Calu3 (cell line): ENCODE measurements at regions of chrX and their contacts with region 1.

Region 1: GRCh38 chrX:4787987-4788386 is 1074.5 kb upstream of the PRKX start:
- DNase-seq: no peak
- H3K4me3 Mint-ChIP-seq: no peak overlapping the region
- H3K27ac Mint-ChIP-seq: no peak overlapping the region
- H3K4me1 Mint-ChIP-seq: no peaks in the 10 kb centered on the region
- H3K27me3 Mint-ChIP-seq: no peaks in the 10 kb centered on the region
- CTCF ChIP-seq: no peak

Region 2: DNA sequence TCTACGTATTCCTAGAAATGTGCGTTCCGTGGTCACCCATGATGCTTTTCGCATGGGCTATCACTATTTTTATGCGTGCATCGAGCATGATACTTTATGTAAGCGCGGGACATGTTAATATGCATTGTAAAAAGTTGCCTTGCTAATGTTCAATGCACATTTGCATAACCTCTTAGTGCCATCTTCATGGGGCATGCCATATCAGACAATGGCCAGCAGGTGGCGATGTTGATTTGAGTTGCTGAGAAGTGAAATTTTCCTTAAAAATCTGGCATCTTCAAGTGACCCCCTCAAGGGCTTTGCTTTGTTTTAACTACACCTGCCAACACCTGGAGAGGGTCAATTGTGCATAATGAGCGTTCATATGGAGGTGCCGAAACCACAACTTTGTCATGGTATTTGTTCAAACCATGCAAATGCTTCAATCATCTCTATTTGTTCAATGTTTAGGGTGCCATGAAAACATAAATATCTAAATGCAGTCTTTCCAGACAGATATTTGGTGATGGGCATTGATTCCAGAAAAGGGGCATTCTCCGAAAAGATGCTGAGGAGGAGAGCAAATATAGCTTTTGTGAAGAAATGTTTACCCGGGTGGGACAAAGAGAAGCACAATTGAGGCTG is 240.7 kb before region 1 on chrX:
- CTCF ChIA-PET with region 1: no interaction called
- intact Hi-C with region 1: loop called (anchors 10 kb)
- DNase-seq: peak; percentile 41
- H3K4me3 Mint-ChIP-seq: no peak overlapping the region
- H3K27ac Mint-ChIP-seq: no peak overlapping the region
- H3K4me1 Mint-ChIP-seq: peaks cover 6% of the 10 kb centered on the region
- H3K27me3 Mint-ChIP-seq: no peaks in the 10 kb centered on the region
- CTCF ChIP-seq: peak; percentile 82

Region 3: GRCh38 chrX:4754878-4755604 is 32.9 kb before region 1 on chrX:
- CTCF ChIA-PET with region 1: no interaction called
- intact Hi-C with region 1: no loop called
- DNase-seq: no peak
- H3K4me3 Mint-ChIP-seq: no peak overlapping the region
- H3K27ac Mint-ChIP-seq: no peak overlapping the region
- H3K4me1 Mint-ChIP-seq: no peaks in the 10 kb centered on the region
- H3K27me3 Mint-ChIP-seq: no peaks in the 10 kb centered on the region
- CTCF ChIP-seq: no peak